ENCODE measurements at regions of chr10 and their contacts with region 1.

Region 1: GRCh38 chr10:30783939-30784500 is 154.5 kb upstream of the LYZL2 start:
- DNase-seq: peak; percentile 91
- ATAC-seq: peak; percentile 84

Region 2: GRCh38 chr10:30980951-30981616 is 197.1 kb after region 1 on chr10:
- intact Hi-C with region 1: no loop called
- DNase-seq: peak; percentile 45
- ATAC-seq: peak; percentile 94

Region 3: DNA sequence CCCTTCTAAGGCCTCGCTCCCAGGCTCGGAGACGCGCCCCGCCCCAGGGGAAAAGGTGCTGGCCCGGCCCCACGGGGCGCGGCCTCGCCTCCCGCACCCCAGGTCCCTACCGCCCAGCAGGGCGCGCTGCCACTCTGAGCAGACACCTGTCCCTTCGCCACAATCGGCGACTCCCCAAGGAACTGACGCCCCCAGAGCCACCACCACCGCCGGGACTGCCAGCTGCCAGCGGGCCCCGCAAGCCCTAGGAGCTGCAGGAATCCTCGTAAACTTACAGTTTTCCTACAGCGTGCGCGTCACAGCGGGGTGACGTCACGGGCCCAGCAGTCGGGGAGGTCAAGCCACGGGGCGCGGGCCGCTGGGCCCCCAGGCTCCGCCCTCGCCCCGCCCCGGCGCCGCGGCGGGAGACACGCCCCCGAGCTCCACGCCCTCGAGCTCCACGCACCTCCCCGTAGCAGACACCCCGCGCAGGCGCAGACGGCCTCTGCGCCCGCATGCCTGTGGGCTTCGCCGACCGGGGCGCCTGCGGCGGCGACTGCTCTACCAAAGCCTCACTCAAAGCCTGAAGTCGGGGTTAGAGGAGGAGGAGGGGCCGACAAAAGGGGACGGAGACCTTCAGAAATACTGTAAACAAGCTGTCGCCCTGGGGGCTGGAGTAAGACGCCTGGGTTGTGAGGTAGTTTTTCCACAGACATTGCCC is 247.7 kb after region 1 on chr10 and contains the start of gene ZNF438:
- intact Hi-C with region 1: loop called (anchors 10 kb)
- DNase-seq: peak; percentile 98
- ATAC-seq: peak; percentile 97
- total RNA-seq, gene ZNF438: 13.9 TPM

Region 4: DNA sequence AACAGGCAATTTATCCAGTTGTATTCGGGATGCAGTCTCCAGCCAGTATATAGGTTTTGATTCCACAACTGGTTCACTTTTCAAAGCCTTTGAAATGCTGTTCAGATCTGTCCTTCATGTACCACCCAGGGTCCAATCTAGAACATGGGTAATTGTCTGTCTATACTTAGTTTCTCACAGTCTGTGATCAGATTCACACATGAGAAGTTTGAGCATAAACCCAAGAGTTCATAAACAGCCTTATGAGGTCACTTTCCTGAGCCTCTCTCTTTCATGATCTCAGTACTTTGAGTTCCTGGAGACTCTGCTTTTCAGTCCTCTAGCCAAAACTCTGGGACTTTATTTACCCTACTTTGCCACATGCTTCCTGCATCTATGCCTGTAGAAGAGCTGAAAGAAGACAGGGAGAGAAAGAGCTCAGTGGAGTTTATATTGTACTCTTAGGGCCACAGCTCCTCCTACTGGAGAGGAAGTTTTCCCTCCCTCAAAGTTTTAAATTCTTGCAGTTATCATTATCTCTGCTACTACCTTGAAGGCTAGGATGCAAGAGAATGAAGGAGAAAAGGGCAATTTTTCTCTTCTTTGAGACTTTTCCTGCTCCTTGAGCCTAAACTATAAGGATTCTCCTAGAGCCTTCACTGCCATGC is 707.0 kb after region 1 on chr10:
- intact Hi-C with region 1: loop called (anchors 10 kb)
- DNase-seq: no peak
- ATAC-seq: peak; percentile 61

Measured in left ventricle myocardium superior (tissue), 1 donor.